PC-3 (cell line): ENCODE measurements at regions of chr3 and their contacts with region 1.

Region 1: DNA sequence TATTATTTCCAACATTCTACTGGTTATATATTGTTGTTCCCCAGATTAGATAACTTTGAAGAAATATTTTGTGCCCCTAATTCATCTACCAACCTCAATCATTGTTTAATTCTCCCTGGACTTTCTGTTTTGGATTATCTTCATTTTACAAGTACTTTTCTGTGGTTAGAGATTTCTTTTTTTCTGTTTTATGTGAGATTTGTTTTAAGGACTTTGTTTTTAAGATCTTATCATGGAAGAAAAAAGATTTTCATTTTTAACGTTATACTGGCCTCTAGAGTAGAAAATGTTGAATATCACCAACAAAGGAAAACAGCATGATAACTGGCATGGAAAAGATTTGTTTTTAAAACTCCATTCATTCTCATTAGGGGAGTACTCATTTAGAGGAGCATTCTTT is 210.9 kb upstream of the KCNMB2 start:
- DNase-seq: peak; percentile 61
- ATAC-seq: peak; percentile 42; the same call in 1 of the 2 replicates
- H3K4me3 ChIP-seq: no peak overlapping the region
- H3K27ac ChIP-seq: no peak overlapping the region
- H3K4me1 ChIP-seq: no peaks in the 10 kb centered on the region
- H3K27me3 ChIP-seq: no peaks in the 10 kb centered on the region
- CTCF ChIP-seq: peak; percentile 73

Region 2: GRCh38 chr3:177050501-177051237 is 1274.7 kb before region 1 on chr3:
- CTCF ChIA-PET with region 1: no interaction called
- POLR2A ChIA-PET with region 1: no interaction called
- intact Hi-C with region 1: loop called (anchors 5 kb)
- DNase-seq: peak; percentile 67
- ATAC-seq: peak; percentile 71
- H3K4me3 ChIP-seq: no peak overlapping the region
- H3K27ac ChIP-seq: no peak overlapping the region
- H3K4me1 ChIP-seq: no peaks in the 10 kb centered on the region
- H3K27me3 ChIP-seq: no peaks in the 10 kb centered on the region
- CTCF ChIP-seq: peak; percentile 75

Region 3: DNA sequence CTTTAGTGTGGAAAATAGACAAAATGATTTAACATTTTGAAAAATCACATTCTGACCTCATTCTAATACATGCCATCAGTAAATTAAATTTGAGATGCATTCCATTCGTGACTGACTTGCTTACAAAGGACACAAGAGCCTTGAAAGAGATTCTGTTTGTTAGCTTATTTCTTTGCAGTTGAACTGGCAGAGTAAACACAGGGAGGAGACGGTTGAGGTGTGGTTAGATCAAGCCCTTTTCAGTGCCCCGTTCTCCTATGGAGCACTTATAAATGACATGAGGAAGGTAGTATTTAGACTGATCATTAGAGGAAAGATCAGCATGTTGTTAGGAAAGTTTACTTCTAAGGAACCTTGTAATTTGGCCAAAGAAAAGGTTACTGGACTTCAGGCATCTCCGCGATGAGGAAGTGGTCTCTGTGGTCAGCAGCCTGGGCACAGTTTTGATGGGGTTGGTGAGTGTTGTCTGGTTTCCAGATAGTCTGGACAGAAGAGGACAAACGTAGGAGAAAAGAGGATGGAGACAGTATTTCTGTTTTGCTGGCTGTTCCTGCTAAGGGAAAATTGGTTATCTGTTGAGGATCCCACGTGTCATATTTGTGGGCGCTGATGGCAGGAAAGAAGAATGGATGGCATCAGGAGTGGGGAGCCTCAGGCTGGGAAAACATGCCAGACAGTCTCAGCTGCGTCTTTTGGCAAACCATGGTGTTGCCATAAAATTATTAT is 799.2 kb before region 1 on chr3:
- CTCF ChIA-PET with region 1: no interaction called
- POLR2A ChIA-PET with region 1: no interaction called
- intact Hi-C with region 1: loop called (anchors 1 kb)
- DNase-seq: peak; percentile 37
- ATAC-seq: peak; percentile 66
- H3K4me3 ChIP-seq: no peak overlapping the region
- H3K27ac ChIP-seq: peak overlapping the region; percentile 35
- H3K4me1 ChIP-seq: peaks cover 33% of the 10 kb centered on the region
- H3K27me3 ChIP-seq: no peaks in the 10 kb centered on the region
- CTCF ChIP-seq: no peak

Region 4: GRCh38 chr3:177777699-177778098 is 547.6 kb before region 1 on chr3:
- CTCF ChIA-PET with region 1: no interaction called
- POLR2A ChIA-PET with region 1: no interaction called
- intact Hi-C with region 1: loop called (anchors 2 kb)
- DNase-seq: peak; percentile 67
- ATAC-seq: peak; percentile 67
- H3K4me3 ChIP-seq: no peak overlapping the region
- H3K27ac ChIP-seq: no peak overlapping the region
- H3K4me1 ChIP-seq: peaks cover 20% of the 10 kb centered on the region
- H3K27me3 ChIP-seq: no peaks in the 10 kb centered on the region
- CTCF ChIP-seq: peak; percentile 73

Region 5: DNA sequence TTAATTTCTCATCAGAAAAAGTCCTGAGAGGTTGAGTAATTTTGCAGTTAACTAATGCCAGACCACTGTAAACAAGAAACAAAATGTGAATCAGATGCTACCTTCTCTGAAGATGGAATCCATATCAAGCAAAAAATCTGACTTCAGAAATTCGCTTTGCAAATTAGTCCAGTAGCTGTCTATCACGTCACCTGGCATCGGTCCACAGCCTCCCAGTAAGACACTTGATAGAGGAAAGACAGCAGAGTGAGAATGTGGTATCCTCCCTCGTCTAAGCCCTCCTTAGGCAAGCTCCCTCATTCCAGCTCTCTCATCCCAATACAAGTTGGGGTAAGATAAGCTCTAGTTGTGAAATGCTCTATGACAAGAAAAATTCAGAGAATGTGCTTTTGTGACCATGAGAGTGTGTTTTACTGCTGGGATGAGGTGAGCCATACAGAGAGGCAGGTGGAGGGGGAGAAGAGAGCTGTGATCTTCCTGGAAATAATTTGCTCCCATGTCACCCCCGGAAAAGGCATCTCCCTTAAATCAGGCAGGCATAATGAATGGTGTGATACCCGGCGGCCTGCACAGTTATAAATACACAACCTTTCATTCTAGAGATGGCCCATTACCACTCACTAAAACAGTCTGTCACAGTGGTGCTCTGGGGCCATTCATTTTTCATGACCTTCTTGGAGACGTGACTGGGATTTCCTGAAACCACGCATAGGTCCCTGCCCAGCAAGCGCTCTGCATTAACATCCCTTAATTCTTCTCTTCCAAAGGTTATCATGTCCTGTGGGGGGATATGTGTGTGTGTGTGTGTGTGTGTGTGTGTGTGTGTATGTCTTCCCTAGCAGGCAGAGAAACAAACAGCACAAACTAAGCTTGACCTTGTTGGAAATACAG is 391.1 kb before region 1 on chr3:
- CTCF ChIA-PET with region 1: no interaction called
- POLR2A ChIA-PET with region 1: no interaction called
- intact Hi-C with region 1: loop called (anchors 10 kb)
- DNase-seq: peak; percentile 21
- ATAC-seq: no peak
- H3K4me3 ChIP-seq: no peak overlapping the region
- H3K27ac ChIP-seq: no peak overlapping the region
- H3K4me1 ChIP-seq: peaks cover 53% of the 10 kb centered on the region
- H3K27me3 ChIP-seq: no peaks in the 10 kb centered on the region
- CTCF ChIP-seq: no peak

Region 6: GRCh38 chr3:178072391-178073305 is 252.7 kb before region 1 on chr3:
- CTCF ChIA-PET with region 1: no interaction called
- POLR2A ChIA-PET with region 1: no interaction called
- intact Hi-C with region 1: no loop called
- DNase-seq: no peak
- ATAC-seq: no peak
- H3K4me3 ChIP-seq: no peak overlapping the region
- H3K27ac ChIP-seq: no peak overlapping the region
- H3K4me1 ChIP-seq: no peaks in the 10 kb centered on the region
- H3K27me3 ChIP-seq: no peaks in the 10 kb centered on the region
- CTCF ChIP-seq: no peak

Region 7: GRCh38 chr3:178097576-178097975 is 227.8 kb before region 1 on chr3:
- CTCF ChIA-PET with region 1: no interaction called
- POLR2A ChIA-PET with region 1: no interaction called
- intact Hi-C with region 1: no loop called
- DNase-seq: no peak
- ATAC-seq: no peak
- H3K4me3 ChIP-seq: no peak overlapping the region
- H3K27ac ChIP-seq: no peak overlapping the region
- H3K4me1 ChIP-seq: no peaks in the 10 kb centered on the region
- H3K27me3 ChIP-seq: no peaks in the 10 kb centered on the region
- CTCF ChIP-seq: no peak

Region 8: GRCh38 chr3:178155521-178155920 is 169.8 kb before region 1 on chr3:
- CTCF ChIA-PET with region 1: no interaction called
- POLR2A ChIA-PET with region 1: no interaction called
- intact Hi-C with region 1: loop called (anchors 10 kb)
- DNase-seq: peak; percentile 19
- ATAC-seq: 0 out of 2 replicates have a peak, but pooled peaks have one; percentile 24
- H3K4me3 ChIP-seq: no peak overlapping the region
- H3K27ac ChIP-seq: no peak overlapping the region
- H3K4me1 ChIP-seq: no peaks in the 10 kb centered on the region
- H3K27me3 ChIP-seq: no peaks in the 10 kb centered on the region
- CTCF ChIP-seq: peak; percentile 39; the same call in 1 of the 2 replicates

Region 9: DNA sequence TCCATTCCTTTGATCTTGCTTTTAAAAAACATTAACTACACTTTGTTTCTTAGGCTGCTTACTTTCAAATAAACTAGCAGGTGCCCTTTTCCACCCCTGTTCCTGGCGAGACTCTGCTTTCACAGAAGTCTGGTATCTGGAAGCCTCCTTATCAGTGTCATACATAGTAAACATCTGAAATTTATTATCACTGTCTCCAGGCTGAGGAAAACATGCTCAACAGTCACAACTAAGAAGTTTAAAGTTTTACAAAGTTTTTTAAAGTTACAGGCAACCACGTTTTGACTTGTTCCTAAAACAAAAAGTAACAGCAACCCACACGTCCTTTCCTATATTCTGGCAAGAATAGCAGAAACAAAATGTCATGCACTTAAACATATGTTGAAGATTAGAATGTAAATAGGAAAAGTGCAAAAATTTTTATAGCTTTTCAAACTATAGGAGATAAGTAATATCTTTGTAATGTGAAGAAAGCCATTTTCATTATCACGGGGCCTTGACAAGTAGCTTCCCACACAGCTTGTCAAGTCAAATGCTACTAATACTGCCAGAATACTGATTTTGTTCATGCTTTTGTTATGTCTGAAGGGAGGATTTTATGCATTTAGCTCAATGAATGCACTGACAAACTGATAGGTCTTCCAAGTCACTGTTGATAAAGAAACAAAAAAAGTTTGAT is 64.3 kb before region 1 on chr3:
- CTCF ChIA-PET with region 1: no interaction called
- POLR2A ChIA-PET with region 1: no interaction called
- intact Hi-C with region 1: no loop called
- DNase-seq: no peak
- ATAC-seq: no peak
- H3K4me3 ChIP-seq: no peak overlapping the region
- H3K27ac ChIP-seq: no peak overlapping the region
- H3K4me1 ChIP-seq: no peaks in the 10 kb centered on the region
- H3K27me3 ChIP-seq: no peaks in the 10 kb centered on the region
- CTCF ChIP-seq: no peak

Region 10: DNA sequence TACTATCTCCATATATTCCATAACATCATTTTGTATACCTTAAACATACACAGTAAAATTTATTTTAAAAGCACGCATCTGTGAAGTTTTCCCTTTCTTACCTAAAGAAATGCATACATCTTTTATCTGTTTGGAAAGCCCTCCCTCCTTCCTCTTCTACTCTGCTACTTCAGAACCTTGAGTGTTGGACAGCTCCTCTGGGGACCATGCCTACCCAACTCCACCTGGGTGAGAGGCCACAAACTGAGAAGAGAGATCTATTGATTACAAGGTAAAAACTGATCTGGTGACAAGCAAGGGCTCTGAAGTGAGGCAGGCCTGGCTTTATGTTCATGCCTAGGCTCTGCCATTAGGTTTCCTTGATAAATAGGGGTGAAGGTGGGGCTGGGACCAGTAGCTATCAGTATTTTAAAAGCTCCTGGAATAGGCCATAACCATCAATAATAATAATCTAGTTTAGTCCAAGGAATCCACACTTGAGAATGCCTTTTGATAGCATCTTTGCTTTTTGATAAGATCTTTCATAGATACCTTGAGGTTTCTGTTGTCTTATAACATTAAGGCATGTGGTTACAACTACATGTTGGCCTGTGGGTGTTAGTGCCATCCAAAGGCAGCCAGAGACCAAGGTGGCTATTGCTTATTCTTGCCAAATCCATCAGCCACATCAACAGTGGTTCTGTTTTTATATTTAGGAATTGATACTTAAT is 359.7 kb after region 1 on chr3:
- CTCF ChIA-PET with region 1: no interaction called
- POLR2A ChIA-PET with region 1: no interaction called
- intact Hi-C with region 1: no loop called
- DNase-seq: peak; percentile 15
- ATAC-seq: no peak
- H3K4me3 ChIP-seq: no peak overlapping the region
- H3K27ac ChIP-seq: no peak overlapping the region
- H3K4me1 ChIP-seq: no peaks in the 10 kb centered on the region
- H3K27me3 ChIP-seq: no peaks in the 10 kb centered on the region
- CTCF ChIP-seq: no peak